Left colon (tissue), 2 donors: ENCODE measurements at regions of chr6 and their contacts with region 1.

Region 1: GRCh38 chr6:44096612-44097011 is 30.6 kb downstream of the MRPL14 start:
- DNase-seq: peak; percentile 68 to 82
- ATAC-seq: peak; percentile 71

Region 2: GRCh38 chr6:44151348-44152108 is 54.9 kb after region 1 on chr6:
- intact Hi-C with region 1: loop called (anchors 5 kb)
- DNase-seq: peak; percentile 60 to 84
- ATAC-seq: peak; percentile 74

Region 3: DNA sequence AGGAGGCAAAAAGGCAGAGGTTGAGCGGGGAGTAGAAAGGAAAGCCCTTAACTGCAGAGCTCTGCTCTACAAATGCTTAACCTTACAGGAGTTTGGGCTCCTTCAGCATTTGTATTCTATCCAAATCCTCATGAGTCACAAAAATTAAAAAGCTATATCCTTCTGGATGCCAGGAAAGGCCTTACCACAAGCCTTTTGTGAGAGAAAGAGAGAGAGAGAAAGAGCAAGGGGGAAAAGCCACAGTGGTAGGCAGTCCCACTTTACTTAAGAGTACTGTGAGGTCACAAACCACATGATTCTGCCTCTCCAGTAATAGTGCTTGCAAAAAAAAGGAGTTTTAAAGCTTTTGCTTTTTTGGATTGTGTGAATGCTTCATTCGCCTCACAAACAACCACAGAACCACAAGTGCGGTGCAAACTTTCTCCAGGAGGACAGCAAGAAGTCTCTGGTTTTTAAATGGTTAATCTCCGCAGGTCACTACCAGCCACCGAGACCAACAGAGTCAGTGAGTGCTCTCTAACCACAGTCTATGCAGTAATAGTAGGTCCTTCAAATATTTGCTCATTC is 1231.4 kb after region 1 on chr6 and contains the start of gene RUNX2:
- intact Hi-C with region 1: no loop called
- DNase-seq: no peak
- ATAC-seq: no peak
- total RNA-seq, gene RUNX2: 2.5 to 3.5 TPM